CD4-positive, alpha-beta memory T cell (primary cell): ENCODE measurements at regions of chr11 and their contacts with region 1.

Region 1: DNA sequence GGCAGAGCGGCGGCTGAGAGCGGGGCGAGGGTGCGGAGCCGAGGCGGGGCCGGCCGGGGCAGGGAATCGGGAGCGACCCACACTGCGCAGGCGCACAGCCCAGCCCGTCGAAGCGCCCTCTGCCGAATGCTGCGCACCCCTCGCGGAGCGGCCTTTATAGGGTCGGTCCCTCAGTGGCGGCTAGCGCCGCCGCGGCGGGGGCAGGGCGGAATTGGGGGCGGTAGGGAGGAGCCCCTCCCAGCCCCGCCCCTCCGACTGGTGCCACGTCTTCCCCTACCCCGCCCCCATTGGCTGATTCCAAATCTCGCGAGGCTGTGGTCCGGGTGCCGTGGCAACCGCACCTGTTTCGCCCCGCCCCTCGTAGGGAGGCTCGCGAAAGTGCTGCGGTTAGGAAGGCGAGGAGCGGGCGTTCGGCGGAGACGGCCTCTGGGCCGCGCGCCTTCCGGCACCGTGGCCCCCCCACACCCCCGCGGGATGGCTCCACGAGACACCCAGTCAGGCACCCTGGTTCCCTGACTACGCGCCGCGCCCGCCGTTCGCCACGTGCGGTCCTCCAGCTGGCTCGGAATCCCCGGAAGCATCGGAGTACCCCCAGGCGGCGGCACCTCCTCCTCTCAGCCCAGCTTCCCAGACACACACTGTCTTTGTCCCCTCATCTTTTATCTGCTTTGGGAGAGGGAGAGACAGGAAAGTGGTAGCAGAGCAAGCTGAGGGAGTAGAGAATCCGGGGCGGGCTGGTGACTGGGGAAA is at the start of gene EHD1:
- DNase-seq: peak; percentile 99 to 100 (median 99)
- H3K4me3 ChIP-seq: peak within 1 kb of the TSS; percentile 82 to 99
- H3K4me3 Mint-ChIP-seq: peak within 1 kb of the TSS; percentile 99 to 100 (median 99)
- H3K27ac ChIP-seq: peak within 1 kb of the TSS; percentile 92
- H3K27ac Mint-ChIP-seq: peak within 1 kb of the TSS; percentile 96 to 98 (median 97)
- H3K4me1 ChIP-seq: peaks cover 58% of the 10 kb centered on the region
- H3K4me1 Mint-ChIP-seq: peaks cover 34 to 77% (median 47%) of the 10 kb centered on the region in 4 donors
- H3K27me3 ChIP-seq: no peaks in the 10 kb centered on the region
- H3K27me3 Mint-ChIP-seq: no peaks in the 10 kb centered on the region
- total RNA-seq, gene EHD1: 268 to 279 TPM

Region 2: GRCh38 chr11:64854534-64855429 is 23.9 kb before region 1 on chr11:
- CTCF ChIA-PET with region 1: interaction called, 1,245 read pairs
- POLR2A ChIA-PET with region 1: interaction called, 2,105 read pairs
- intact Hi-C with region 1: loop called (anchors 1 kb)
- DNase-seq: peak in 2 of 5 donors; percentile 40 to 83
- H3K4me3 ChIP-seq: peak overlapping the region; percentile 6 to 21
- H3K4me3 Mint-ChIP-seq: peak overlapping the region; percentile 48 to 89 (median 74)
- H3K27ac ChIP-seq: peak overlapping the region; percentile 70
- H3K27ac Mint-ChIP-seq: peak overlapping the region; percentile 90 to 99 (median 93)
- H3K4me1 ChIP-seq: peaks cover 96% of the 10 kb centered on the region
- H3K4me1 Mint-ChIP-seq: peaks cover 60 to 92% (median 76%) of the 10 kb centered on the region in 4 donors
- H3K27me3 ChIP-seq: no peaks in the 10 kb centered on the region
- H3K27me3 Mint-ChIP-seq: no peaks in the 10 kb centered on the region

Region 3: GRCh38 chr11:64894070-64894796 is 15.6 kb after region 1 on chr11:
- CTCF ChIA-PET with region 1: interaction called, 39 read pairs
- POLR2A ChIA-PET with region 1: interaction called, 66 read pairs
- intact Hi-C with region 1: loop called (anchors 2 kb)
- DNase-seq: peak; percentile 82 to 87 (median 84)
- H3K4me3 ChIP-seq: no peak overlapping the region
- H3K4me3 Mint-ChIP-seq: no peak overlapping the region
- H3K27ac ChIP-seq: no peak overlapping the region
- H3K27ac Mint-ChIP-seq: peak overlapping the region in 3 of 7 donors; percentile 64 to 76 (median 74)
- H3K4me1 ChIP-seq: peaks cover 4% of the 10 kb centered on the region
- H3K4me1 Mint-ChIP-seq: peaks cover 2 to 12% (median 2%) of the 10 kb centered on the region in 4 donors
- H3K27me3 ChIP-seq: no peaks in the 10 kb centered on the region
- H3K27me3 Mint-ChIP-seq: no peaks in the 10 kb centered on the region

Region 4: GRCh38 chr11:64916775-64917662 is 38.4 kb after region 1 on chr11 and contains the start of gene ATG2A:
- CTCF ChIA-PET with region 1: no interaction called
- POLR2A ChIA-PET with region 1: interaction called, 9 read pairs
- intact Hi-C with region 1: loop called (anchors 1 kb)
- DNase-seq: peak; percentile 98 to 99 (median 99)
- H3K4me3 ChIP-seq: peak within 1 kb of the TSS; percentile 94 to 97
- H3K4me3 Mint-ChIP-seq: peak within 1 kb of the TSS; percentile 91 to 96 (median 93)
- H3K27ac ChIP-seq: peak within 1 kb of the TSS; percentile 88
- H3K27ac Mint-ChIP-seq: peak within 1 kb of the TSS; percentile 93 to 97 (median 96)
- H3K4me1 ChIP-seq: peaks cover 27% of the 10 kb centered on the region
- H3K4me1 Mint-ChIP-seq: peaks cover 15 to 28% (median 23%) of the 10 kb centered on the region in 4 donors
- H3K27me3 ChIP-seq: no peaks in the 10 kb centered on the region
- H3K27me3 Mint-ChIP-seq: no peaks in the 10 kb centered on the region
- total RNA-seq, gene ATG2A: 45.7 to 47.3 TPM

Region 5: GRCh38 chr11:64933213-64933924 is 54.7 kb after region 1 on chr11:
- CTCF ChIA-PET with region 1: no interaction called
- POLR2A ChIA-PET with region 1: no interaction called
- intact Hi-C with region 1: no loop called
- DNase-seq: no peak
- H3K4me3 ChIP-seq: no peak overlapping the region
- H3K4me3 Mint-ChIP-seq: no peak overlapping the region
- H3K27ac ChIP-seq: no peak overlapping the region
- H3K27ac Mint-ChIP-seq: no peak overlapping the region
- H3K4me1 ChIP-seq: no peaks in the 10 kb centered on the region
- H3K4me1 Mint-ChIP-seq: no peaks in the 10 kb centered on the region
- H3K27me3 ChIP-seq: no peaks in the 10 kb centered on the region
- H3K27me3 Mint-ChIP-seq: no peaks in the 10 kb centered on the region